Panc1 (cell line): ENCODE measurements at regions of chr15 and their contacts with region 1.

Region 1: GRCh38 chr15:88375234-88375927 is 91.8 kb downstream of the MRPL46 start:
- DNase-seq: no peak
- ATAC-seq: 0 out of 2 replicates have a peak, but pooled peaks have one; percentile 42
- H3K4me3 ChIP-seq: no peak overlapping the region
- H3K27ac ChIP-seq: no peak overlapping the region
- H3K4me1 ChIP-seq: no peaks in the 10 kb centered on the region
- H3K27me3 ChIP-seq: peaks cover 9% of the 10 kb centered on the region
- CTCF ChIP-seq: no peak

Region 2: GRCh38 chr15:88299497-88299896 is 75.9 kb before region 1 on chr15:
- CTCF ChIA-PET with region 1: no interaction called
- POLR2A ChIA-PET with region 1: no interaction called
- in situ Hi-C with region 1: no loop called
- intact Hi-C with region 1: loop called (anchors 10 kb)
- DNase-seq: no peak
- ATAC-seq: no peak
- H3K4me3 ChIP-seq: no peak overlapping the region
- H3K27ac ChIP-seq: no peak overlapping the region
- H3K4me1 ChIP-seq: no peaks in the 10 kb centered on the region
- H3K27me3 ChIP-seq: peaks cover 11% of the 10 kb centered on the region; the same call in 1 of the 2 replicates
- CTCF ChIP-seq: no peak

Region 3: DNA sequence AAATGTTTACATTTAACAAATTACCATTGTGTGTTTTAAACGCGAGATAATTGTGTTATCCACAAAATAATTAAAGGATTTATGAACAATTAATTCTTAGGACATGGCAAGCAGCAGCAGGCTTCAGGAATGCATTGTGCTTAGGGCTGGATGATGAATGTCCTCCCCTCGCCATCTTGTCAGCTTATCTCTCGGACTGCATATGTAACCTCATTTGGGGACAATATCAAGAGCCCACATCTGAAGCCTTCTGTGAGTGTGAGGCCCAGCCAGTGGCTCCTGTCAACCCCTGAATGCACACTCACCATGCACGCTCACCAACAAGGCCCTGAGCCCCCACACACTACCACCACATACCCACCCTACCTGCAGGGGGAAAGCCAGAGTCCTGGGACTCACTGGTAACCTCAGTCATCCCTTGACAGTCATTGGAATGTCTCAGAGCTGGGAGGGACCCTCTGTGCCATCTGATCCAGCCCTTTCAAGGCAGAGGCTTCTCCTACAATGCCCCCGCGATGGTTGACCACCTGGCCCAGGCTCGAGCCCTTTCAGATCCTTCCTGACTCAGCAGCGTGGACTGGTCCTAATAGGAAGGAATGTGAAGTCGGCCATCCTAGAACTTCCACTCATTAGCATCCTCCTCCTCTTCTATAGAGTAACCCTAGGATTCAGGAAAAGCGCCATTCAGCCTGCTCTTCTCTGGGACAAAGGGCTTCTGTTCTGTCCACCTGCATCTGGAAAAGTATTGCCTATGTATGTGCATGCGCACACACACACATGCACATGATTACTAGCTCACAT is 53.6 kb after region 1 on chr15:
- CTCF ChIA-PET with region 1: no interaction called
- POLR2A ChIA-PET with region 1: no interaction called
- in situ Hi-C with region 1: no loop called
- intact Hi-C with region 1: no loop called
- DNase-seq: no peak
- ATAC-seq: no peak
- H3K4me3 ChIP-seq: no peak overlapping the region
- H3K27ac ChIP-seq: no peak overlapping the region
- H3K4me1 ChIP-seq: no peaks in the 10 kb centered on the region
- H3K27me3 ChIP-seq: peaks cover 7% of the 10 kb centered on the region; the same call in 1 of the 2 replicates
- CTCF ChIP-seq: no peak